GM10248 (cell line): ENCODE measurements at regions of chr1 and their contacts with region 1.

Region 1: DNA sequence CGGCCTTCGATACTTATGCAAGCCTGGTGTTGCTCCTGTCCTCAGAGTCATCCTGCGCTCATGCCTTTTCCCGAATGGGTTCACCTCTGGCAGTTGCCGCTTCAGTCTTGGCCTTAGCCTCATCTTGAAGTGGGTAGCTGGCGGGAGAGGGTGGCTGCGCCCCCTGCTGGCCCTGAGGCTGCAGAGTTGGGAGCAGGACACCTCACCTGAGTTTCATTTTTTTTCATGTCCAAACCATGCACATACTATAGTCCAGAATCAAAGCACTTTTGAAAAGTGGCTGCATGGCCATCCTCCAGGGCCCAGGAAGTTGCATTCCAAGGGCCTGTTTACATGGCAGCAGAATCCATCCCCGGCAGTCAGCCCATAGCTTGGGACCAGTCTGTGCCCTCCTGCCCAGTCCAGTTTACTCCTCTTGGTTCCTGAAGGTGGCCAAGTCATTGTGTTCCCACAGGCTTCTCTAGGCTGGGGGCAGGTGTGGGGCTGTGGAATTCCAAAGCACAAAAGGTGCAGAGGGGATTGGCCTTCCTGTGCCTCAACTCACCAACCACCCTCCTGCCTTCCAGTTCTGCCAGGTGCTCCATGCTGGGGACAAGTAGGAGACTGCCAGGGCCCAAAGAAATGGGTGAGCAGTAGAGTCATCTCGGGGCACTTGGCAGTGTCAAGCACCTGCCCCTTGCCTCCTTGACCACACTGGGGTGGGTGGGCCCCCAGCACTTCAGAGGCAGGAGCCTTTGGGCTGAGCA is 44.0 kb downstream of the YARS1 start:
- DNase-seq: peak; percentile 89
- CTCF ChIP-seq: peak; percentile 95

Region 2: DNA sequence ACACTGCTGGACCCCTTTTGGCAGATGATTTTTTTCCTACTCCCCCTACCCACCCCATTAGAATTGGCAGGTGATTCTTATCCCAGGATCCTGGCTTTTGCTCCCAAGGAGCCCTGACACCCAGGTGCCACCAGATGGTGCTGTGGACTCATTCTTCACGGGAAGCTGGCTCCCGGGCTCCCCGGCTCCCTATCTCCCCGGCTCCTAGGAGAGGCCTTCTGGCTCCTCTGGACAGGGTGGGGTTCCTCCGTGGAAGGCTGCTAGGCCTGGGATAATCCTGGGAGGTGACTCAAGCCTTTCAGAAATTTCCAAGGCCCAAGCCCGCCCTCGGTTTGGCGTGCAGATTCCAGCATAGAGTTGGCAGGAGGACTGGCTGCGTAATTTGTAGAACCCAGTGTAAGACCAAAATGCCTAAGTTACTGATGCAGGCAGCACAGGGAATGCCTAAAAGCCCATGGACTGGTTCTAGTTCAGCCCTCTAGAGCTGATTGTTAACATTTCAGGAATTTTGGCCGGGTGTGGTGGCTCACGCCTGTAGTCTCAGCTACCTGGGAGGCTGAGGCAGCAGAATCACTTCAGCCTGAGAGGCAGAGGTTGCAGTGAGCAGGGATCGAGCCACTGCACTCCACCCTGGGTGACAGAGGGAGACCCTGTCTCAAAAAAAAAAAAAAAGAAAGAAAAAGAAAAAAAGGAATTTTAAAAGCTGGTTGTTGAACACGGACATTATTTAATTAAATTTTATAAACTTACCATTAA is 372.1 kb before region 1 on chr1:
- CTCF ChIA-PET with region 1: interaction called, 27 read pairs
- POLR2A ChIA-PET with region 1: no interaction called
- DNase-seq: peak; percentile 72
- CTCF ChIP-seq: peak; percentile 90

Region 3: GRCh38 chr1:32702599-32703478 is 70.4 kb before region 1 on chr1 and contains the start of gene SYNC:
- CTCF ChIA-PET with region 1: interaction called, 29 read pairs
- POLR2A ChIA-PET with region 1: no interaction called
- DNase-seq: peak; percentile 51
- CTCF ChIP-seq: no peak

Region 4: GRCh38 chr1:32733582-32734321 is 39.4 kb before region 1 on chr1:
- CTCF ChIA-PET with region 1: interaction called, 10 read pairs
- POLR2A ChIA-PET with region 1: no interaction called
- DNase-seq: peak; percentile 56
- CTCF ChIP-seq: no peak

Region 5: DNA sequence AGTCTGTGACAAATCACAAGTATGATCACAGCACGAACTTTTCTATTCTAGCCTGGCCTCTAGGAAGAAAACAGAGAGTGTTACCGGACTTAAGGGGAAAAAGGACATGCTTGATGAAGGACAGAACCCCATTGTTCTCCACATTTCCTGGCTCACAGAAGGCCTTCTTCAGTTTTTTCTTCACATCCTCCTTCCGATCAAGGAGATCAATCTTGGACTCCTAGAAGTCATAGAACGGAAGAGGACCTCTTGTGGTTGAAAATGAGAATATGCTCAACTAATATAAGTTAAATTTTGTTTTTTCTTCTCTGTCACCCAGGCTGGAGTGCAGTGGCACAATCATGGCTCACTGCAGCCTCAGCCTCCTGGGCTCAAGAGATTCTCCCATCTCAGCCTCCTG is 13.7 kb after region 1 on chr1:
- CTCF ChIA-PET with region 1: interaction called, 46 read pairs
- POLR2A ChIA-PET with region 1: no interaction called
- DNase-seq: no peak
- CTCF ChIP-seq: no peak

Region 6: DNA sequence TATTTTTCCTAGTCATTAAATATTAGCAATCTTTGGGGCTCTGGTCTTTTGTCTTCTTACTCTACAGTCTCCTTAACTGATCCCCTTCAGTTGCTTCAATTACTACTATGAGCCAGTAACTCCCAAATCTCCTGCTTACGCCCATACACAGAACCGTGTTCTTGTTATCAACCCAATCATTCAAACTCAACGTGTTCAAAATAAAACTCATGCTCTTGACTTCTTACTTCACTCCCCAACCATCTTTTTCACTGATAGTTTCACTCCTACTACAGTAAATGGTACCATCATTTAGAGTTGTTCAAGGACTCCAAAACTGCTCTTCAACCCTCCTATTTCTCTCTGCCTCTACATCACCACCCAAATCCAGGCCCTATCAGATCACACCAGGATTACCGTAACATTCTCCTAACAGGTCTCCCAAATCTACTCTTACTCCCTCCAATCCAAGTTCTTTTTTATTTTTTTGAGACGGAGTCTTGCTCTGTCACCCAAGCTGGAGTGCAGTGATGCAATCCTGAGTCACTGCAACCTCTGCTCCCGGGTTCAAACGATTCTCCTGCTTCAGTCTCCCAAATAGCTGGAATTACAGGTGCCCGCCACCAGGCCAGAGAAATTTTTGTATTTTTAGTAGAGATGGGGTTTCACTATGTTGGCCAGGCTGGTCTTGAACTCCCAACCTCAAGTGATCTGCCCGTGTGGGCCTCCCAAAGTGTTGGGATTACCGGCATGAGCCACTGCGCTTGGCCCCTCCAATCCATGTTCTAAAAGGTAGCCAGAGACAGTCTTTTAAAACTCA is 40.9 kb after region 1 on chr1:
- CTCF ChIA-PET with region 1: interaction called, 13 read pairs
- POLR2A ChIA-PET with region 1: interaction called, 3 read pairs
- DNase-seq: no peak
- CTCF ChIP-seq: no peak

Region 7: DNA sequence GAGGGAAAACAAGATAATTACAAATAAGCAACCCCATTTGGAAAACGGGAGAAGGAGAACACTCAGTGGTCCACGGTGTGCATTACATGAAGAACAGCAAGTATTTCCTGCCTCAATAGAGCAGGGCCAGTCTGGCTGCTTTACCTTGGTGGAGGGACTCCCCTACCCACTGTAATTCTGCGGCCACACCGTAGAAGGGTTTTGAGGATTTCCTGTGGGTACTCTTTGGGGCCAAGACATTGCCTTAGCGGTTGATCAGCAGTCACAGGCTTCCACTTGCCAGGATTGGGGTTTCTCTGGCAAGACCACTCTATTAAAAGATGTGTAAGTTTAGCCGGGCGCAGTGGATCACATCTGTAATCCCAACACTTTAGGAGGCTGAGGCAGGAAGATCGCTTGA is 144.4 kb after region 1 on chr1:
- CTCF ChIA-PET with region 1: no interaction called
- POLR2A ChIA-PET with region 1: no interaction called
- DNase-seq: no peak
- CTCF ChIP-seq: no peak

Region 8: DNA sequence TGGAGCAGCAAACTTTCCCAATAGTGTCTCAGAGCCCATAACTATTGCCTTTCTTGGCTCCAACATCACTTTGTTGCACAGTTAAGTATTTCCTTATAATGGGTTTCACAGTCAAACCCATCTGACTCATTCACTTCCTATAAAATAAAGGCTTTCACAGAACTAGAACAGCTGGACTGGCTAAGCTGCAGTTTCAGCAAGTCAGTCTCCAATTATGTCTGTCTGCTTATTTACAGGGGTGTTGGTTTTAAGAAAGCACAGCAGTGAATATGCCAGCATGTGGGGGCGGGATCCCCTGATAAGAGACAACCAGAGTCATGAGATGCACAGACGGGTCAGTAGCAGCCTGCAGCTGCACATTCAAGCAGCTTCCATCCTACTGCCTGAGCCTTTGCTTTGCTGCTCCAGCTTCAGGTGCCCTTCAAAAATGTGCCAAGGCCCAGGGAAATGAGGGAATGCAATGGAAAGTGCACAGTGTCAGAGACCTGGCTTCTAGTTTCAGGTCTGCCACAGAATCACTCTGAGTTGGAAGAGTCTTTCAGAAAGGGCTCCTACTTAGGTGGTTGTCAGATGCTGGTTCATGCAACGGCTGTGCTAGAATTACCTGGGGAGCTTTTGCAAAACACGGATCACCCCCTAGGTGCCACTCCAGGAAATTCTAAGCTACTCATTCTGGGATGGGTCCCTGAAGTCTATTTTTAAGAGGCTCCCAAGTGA is 166.6 kb after region 1 on chr1:
- CTCF ChIA-PET with region 1: no interaction called
- POLR2A ChIA-PET with region 1: no interaction called
- DNase-seq: no peak
- CTCF ChIP-seq: no peak